Panc1 (cell line): ENCODE measurements at regions of chr11 and their contacts with region 1.

Region 1: DNA sequence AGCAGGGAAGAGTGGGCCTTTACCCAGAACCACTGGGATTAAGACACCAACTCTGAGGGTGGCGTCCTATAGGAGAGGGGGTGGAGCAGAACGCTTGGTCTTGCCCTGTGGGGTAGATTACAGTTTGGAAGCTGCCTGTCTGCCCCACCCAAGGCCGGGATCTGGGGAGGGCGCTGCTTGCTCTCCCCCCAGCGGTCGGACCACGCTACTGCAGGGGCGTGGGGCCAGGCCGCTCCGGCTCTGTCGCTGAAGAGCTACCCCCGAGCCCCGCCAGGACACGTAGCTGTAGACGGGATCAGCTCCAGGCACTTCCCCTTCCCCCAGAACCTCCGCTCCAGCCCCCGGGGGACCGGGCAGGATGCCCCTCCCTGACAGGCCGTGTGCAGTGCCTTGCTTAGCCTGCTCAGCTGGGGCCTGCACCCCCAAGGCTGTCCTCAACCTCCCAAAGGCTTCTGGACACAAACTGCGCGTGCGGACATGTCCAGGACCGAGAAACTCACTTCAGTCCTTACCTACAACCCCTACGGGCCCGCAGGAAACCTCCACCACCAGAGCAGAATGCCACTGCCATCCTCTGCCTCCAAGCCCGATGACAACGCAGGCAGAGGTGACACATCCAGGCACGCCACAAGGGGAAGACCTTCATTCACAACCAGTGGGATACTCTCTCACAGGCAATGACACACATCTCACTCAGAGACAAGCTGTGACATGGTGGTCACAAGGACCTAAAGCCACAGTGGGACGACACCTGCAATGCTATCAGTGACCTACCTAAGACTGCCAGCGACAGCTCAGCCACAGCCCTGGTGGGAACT is 3.6 kb downstream of the AHNAK start:
- DNase-seq: no peak
- ATAC-seq: peak; percentile 43
- H3K4me3 ChIP-seq: peak overlapping the region; percentile 80 to 98
- H3K27ac ChIP-seq: peak overlapping the region; percentile 96
- H3K4me1 ChIP-seq: peaks cover 45% of the 10 kb centered on the region
- H3K27me3 ChIP-seq: no peaks in the 10 kb centered on the region
- CTCF ChIP-seq: peak; percentile 98

Region 2: GRCh38 chr11:62337303-62338181 is 205.4 kb before region 1 on chr11 and contains the start of gene ASRGL1:
- CTCF ChIA-PET with region 1: no interaction called
- POLR2A ChIA-PET with region 1: no interaction called
- in situ Hi-C with region 1: no loop called
- intact Hi-C with region 1: no loop called
- DNase-seq: no peak
- ATAC-seq: peak; percentile 98
- H3K4me3 ChIP-seq: peak within 1 kb of the TSS; percentile 68 to 79
- H3K27ac ChIP-seq: peak within 1 kb of the TSS; percentile 73
- H3K4me1 ChIP-seq: no peaks in the 10 kb centered on the region
- H3K27me3 ChIP-seq: no peaks in the 10 kb centered on the region; the same call in 1 of the 2 replicates
- CTCF ChIP-seq: no peak
- total RNA-seq, gene ASRGL1: 43.2 TPM

Region 3: GRCh38 chr11:62394825-62395538 is 148.0 kb before region 1 on chr11:
- CTCF ChIA-PET with region 1: interaction called, 11 read pairs
- POLR2A ChIA-PET with region 1: no interaction called
- in situ Hi-C with region 1: no loop called
- intact Hi-C with region 1: loop called (anchors 10 kb)
- DNase-seq: no peak
- ATAC-seq: peak; percentile 94
- H3K4me3 ChIP-seq: no peak overlapping the region; a peak in 1 of 4 replicates
- H3K27ac ChIP-seq: peak overlapping the region; percentile 77
- H3K4me1 ChIP-seq: peaks cover 41% of the 10 kb centered on the region
- H3K27me3 ChIP-seq: no peaks in the 10 kb centered on the region
- CTCF ChIP-seq: peak; percentile 75; the same call in 1 of the 2 replicates

Region 4: GRCh38 chr11:62427630-62428233 is 115.2 kb before region 1 on chr11:
- CTCF ChIA-PET with region 1: interaction called, 29 read pairs
- POLR2A ChIA-PET with region 1: interaction called, 7 read pairs
- in situ Hi-C with region 1: no loop called
- intact Hi-C with region 1: loop called (anchors 5 kb)
- DNase-seq: no peak
- ATAC-seq: no peak
- H3K4me3 ChIP-seq: no peak overlapping the region
- H3K27ac ChIP-seq: peak overlapping the region; percentile 98
- H3K4me1 ChIP-seq: peaks cover 54% of the 10 kb centered on the region
- H3K27me3 ChIP-seq: no peaks in the 10 kb centered on the region
- CTCF ChIP-seq: no peak

Region 5: GRCh38 chr11:62508268-62509058 is 34.5 kb before region 1 on chr11:
- CTCF ChIA-PET with region 1: interaction called, 9 read pairs
- POLR2A ChIA-PET with region 1: interaction called, 14 read pairs
- in situ Hi-C with region 1: no loop called
- intact Hi-C with region 1: loop called (anchors 5 kb)
- DNase-seq: peak; percentile 27
- ATAC-seq: peak; percentile 82
- H3K4me3 ChIP-seq: peak overlapping the region in 1 of 2 experiments; percentile 35; a peak in 2 of 4 replicates
- H3K27ac ChIP-seq: peak overlapping the region; percentile 99
- H3K4me1 ChIP-seq: peaks cover 93% of the 10 kb centered on the region
- H3K27me3 ChIP-seq: no peaks in the 10 kb centered on the region
- CTCF ChIP-seq: peak; percentile 83; the same call in 1 of the 2 replicates

Region 6: DNA sequence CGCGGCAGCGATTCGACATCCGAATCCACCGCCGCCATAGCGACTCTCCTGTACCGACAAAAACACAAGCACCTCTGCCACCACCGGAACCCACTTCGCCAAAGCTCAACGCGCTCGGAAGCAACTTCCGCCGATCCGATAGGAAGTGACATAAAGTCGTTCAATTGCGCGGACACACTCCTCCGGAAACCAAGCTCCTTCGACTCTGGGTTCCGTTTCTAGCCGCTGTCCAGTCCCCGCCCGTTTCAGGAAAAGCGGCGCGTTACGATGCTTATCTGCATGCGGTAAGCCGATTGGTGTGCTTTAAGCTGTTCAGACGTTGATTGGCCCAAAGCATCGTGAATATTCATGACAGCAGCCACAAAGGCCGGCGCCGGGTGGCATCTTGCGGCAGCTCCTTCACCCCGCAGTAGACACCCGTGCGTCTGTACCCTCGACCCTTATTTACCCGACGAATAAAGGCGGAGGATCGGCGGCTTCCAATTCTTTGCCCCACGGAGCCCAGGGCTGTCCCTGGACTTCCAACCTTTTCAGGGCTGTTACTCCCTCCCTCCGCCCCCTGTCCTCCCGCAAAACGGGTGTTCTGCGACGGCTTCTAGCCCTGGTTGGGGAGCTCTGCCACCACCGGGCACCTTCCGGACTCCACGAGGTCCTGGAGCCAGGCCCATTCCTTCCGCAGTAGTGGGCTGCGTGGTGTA is 48.6 kb after region 1 on chr11 and contains the start of gene TUT1:
- CTCF ChIA-PET with region 1: interaction called, 3 read pairs
- POLR2A ChIA-PET with region 1: interaction called, 14 read pairs
- in situ Hi-C with region 1: no loop called
- intact Hi-C with region 1: no loop called
- DNase-seq: peak; percentile 95
- ATAC-seq: peak; percentile 94
- H3K4me3 ChIP-seq: peak within 1 kb of the TSS; percentile 74 to 86
- H3K27ac ChIP-seq: peak within 1 kb of the TSS; percentile 97
- H3K4me1 ChIP-seq: peaks cover 24% of the 10 kb centered on the region
- H3K27me3 ChIP-seq: no peaks in the 10 kb centered on the region
- CTCF ChIP-seq: no peak
- total RNA-seq, gene TUT1: 19.9 TPM